Tibial artery (tissue), 4 donors: ENCODE measurements at regions of chr5 and their contacts with region 1.

Region 1: DNA sequence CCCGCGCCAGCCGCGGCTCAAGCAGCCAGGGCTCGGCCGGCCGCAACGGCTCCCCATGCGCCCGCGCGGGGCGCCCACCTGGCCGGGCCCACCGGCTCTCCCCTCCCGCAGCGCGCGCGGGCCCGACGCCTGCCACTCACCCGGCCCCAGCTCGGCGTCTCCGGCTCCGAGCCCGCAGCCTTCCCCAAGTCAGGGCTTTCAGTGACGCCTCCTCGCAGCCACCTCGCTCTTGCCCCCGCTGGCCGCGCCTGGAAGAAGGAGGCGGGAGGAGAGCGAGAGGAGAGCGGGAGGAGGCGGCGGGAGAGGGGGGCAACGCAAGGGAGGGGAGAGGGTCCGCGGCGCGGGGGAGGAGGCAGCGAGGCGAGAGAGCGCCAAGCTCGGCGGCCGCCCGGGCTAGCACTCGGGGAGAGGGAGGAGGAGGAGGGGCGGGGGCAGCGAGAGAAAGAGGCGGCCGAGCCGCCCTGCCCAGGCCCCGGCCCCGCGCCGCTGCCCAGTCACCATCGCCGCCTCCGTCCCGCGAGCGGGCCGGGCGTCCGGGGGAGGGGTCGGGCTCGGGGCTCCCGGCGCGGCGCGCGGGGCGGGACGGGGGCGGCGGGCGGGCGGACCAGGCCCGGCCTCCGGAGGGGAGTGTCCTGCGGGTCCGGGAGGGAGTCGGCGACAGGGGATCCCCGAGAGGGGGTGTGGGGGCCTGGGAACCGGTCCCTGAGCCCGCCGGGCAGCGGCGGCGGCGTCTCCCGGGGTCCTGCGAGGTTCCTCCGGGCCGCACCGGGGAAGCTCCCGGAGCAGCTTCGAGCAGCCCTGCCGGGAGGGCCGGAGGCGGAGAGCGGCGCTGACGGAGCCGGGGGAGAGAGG is at the start of gene LHFPL2:
- DNase-seq: peak; percentile 83 to 90
- H3K4me3 ChIP-seq: peak within 1 kb of the TSS; percentile 67 to 70
- H3K27ac ChIP-seq: peak within 1 kb of the TSS; percentile 97 to 99
- H3K4me1 ChIP-seq: peaks cover 0 to 60% (median 49%) of the 10 kb centered on the region in 4 donors
- H3K27me3 ChIP-seq: no peaks in the 10 kb centered on the region
- CTCF ChIP-seq: no peak

Region 2: DNA sequence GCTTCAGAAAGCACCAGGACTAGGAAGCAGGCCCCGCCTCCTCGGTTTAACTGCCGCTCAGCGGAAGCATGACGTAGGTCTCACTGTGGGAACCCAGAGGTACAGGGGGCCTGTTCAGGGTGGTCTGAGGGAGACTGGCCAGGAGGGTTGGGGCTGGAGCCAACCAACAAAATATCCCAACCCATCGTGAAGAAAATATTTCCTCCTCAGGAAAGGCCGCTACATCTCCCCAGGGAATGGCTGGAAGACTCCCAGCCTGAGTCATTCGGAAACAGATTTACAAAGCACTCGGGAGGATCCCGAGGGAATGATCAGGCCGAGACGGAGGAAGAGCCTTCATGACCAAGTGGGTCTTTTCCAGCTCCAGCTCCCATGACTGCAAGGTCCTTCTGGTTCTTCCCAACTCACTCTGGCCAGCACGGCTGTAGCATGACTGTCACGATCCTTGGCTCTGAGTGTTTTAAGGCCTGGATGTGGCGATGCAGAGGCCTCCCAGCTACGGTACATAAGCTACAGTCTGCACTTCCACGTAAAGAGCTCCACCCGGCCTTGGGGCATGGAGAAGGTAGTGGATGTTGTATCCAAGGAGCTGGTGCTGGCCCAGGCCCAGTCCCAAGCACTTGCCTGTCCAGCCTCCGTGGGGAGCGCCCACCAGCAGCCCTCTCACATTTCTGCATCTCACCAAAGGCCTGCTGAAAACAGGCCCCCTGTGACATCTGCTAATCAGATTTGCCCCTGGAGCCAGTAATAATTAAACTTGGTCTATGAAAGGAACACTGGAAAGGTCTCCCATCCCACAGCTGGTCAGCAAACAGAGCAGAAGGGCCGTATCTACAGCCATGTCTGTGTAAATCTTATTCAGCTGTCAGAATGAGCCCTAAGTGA is 100.6 kb before region 1 on chr5:
- intact Hi-C with region 1: loop called (anchors 5 kb)
- DNase-seq: peak; percentile 96 to 98
- H3K4me3 ChIP-seq: peak overlapping the region; percentile 29 to 30
- H3K27ac ChIP-seq: peak overlapping the region; percentile 76 to 85
- H3K4me1 ChIP-seq: peaks cover 5 to 56% (median 34%) of the 10 kb centered on the region in 4 donors
- H3K27me3 ChIP-seq: no peaks in the 10 kb centered on the region
- CTCF ChIP-seq: no peak

Region 3: GRCh38 chr5:78803353-78803752 is 154.8 kb after region 1 on chr5:
- intact Hi-C with region 1: loop called (anchors 10 kb)
- DNase-seq: peak; percentile 90 to 95
- H3K4me3 ChIP-seq: no peak overlapping the region
- H3K27ac ChIP-seq: peak overlapping the region; percentile 54 to 67
- H3K4me1 ChIP-seq: peaks cover 0 to 30% (median 23%) of the 10 kb centered on the region in 4 donors
- H3K27me3 ChIP-seq: no peaks in the 10 kb centered on the region
- CTCF ChIP-seq: no peak

Region 4: GRCh38 chr5:78899922-78900362 is 251.4 kb after region 1 on chr5:
- intact Hi-C with region 1: loop called (anchors 10 kb)
- DNase-seq: no peak
- H3K4me3 ChIP-seq: no peak overlapping the region
- H3K27ac ChIP-seq: no peak overlapping the region
- H3K4me1 ChIP-seq: no peaks in the 10 kb centered on the region
- H3K27me3 ChIP-seq: no peaks in the 10 kb centered on the region
- CTCF ChIP-seq: peak in 1 of 2 experiments; percentile 25